MCF 10A (cell line): ENCODE measurements at regions of chr9 and their contacts with region 1.

Region 1: GRCh38 chr9:129177791-129178559 is at the start of gene IER5L:
- DNase-seq: peak; percentile 95
- H3K4me3 Mint-ChIP-seq: peak within 1 kb of the TSS; percentile 89
- H3K27ac Mint-ChIP-seq: peak within 1 kb of the TSS; percentile 51
- H3K4me1 Mint-ChIP-seq: no peaks in the 10 kb centered on the region
- H3K27me3 Mint-ChIP-seq: no peaks in the 10 kb centered on the region
- CTCF ChIP-seq: no peak
- total RNA-seq, gene IER5L: 11.9 and 13.4 TPM in 2 replicates

Region 2: DNA sequence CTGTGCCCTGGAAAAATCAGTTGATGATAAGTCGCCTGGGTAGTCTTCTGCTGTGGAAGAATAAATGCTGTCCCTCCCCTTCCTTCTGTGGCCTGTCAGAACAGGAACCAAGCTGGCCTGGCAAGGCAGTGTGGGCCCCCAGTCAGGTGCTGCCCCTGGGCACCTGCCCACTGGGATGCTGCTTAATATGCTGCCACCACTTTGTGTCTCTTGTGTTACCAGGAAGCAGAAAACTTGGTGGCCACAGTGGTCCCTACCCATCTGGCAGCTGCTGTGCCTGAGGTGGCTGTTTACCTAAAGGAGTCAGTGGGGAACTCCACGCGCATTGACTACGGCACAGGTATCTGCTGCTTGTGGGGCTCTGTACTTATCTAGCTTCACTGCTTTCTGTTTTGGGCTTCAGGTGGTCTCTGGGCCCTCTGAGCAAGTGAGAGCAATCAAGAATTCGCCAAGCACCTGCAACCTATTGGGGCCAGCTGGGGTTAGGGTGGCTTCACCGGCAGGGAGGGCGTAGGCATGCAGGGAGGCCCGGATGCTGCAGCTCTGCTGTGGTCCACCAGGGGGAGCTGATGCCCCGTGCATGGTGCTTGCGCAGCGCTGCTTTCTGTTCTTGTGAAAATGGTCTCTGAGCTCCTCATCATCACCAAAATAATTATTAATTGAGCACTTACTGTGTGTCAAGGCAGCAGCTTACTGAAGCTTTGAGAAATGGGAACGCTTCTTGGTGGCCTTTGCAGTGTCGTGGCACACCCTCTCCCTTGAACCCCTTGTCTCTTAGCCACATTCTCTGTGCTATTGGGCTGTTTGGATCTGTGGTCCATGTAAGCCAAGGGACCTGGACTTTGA is 46.5 kb before region 1 on chr9:
- CTCF ChIA-PET with region 1: interaction called, 18 read pairs
- POLR2A ChIA-PET with region 1: interaction called, 9 read pairs
- intact Hi-C with region 1: no loop called
- DNase-seq: peak; percentile 70
- H3K4me3 Mint-ChIP-seq: no peak overlapping the region
- H3K27ac Mint-ChIP-seq: no peak overlapping the region
- H3K4me1 Mint-ChIP-seq: no peaks in the 10 kb centered on the region
- H3K27me3 Mint-ChIP-seq: no peaks in the 10 kb centered on the region
- CTCF ChIP-seq: peak; percentile 92

Region 3: GRCh38 chr9:129166623-129167557 is 11.1 kb before region 1 on chr9:
- CTCF ChIA-PET with region 1: interaction called, 8 read pairs
- POLR2A ChIA-PET with region 1: interaction called, 29 read pairs
- intact Hi-C with region 1: no loop called
- DNase-seq: peak; percentile 81
- H3K4me3 Mint-ChIP-seq: peak overlapping the region; percentile 63
- H3K27ac Mint-ChIP-seq: peak overlapping the region; percentile 87
- H3K4me1 Mint-ChIP-seq: peaks cover 25% of the 10 kb centered on the region
- H3K27me3 Mint-ChIP-seq: no peaks in the 10 kb centered on the region
- CTCF ChIP-seq: no peak

Region 4: GRCh38 chr9:129333953-129334724 is 156.2 kb after region 1 on chr9:
- CTCF ChIA-PET with region 1: interaction called, 28 read pairs
- POLR2A ChIA-PET with region 1: interaction called, 206 read pairs
- intact Hi-C with region 1: loop called (anchors 1 kb)
- DNase-seq: peak; percentile 98
- H3K4me3 Mint-ChIP-seq: peak overlapping the region; percentile 71
- H3K27ac Mint-ChIP-seq: peak overlapping the region; percentile 97
- H3K4me1 Mint-ChIP-seq: peaks cover 19% of the 10 kb centered on the region
- H3K27me3 Mint-ChIP-seq: no peaks in the 10 kb centered on the region
- CTCF ChIP-seq: no peak

Region 5: GRCh38 chr9:129482521-129483414 is 304.8 kb after region 1 on chr9:
- CTCF ChIA-PET with region 1: interaction called, 4 read pairs
- POLR2A ChIA-PET with region 1: interaction called, 75 read pairs
- intact Hi-C with region 1: no loop called
- DNase-seq: peak; percentile 92
- H3K4me3 Mint-ChIP-seq: peak overlapping the region; percentile 70
- H3K27ac Mint-ChIP-seq: peak overlapping the region; percentile 93
- H3K4me1 Mint-ChIP-seq: peaks cover 47% of the 10 kb centered on the region
- H3K27me3 Mint-ChIP-seq: no peaks in the 10 kb centered on the region
- CTCF ChIP-seq: no peak

Region 6: DNA sequence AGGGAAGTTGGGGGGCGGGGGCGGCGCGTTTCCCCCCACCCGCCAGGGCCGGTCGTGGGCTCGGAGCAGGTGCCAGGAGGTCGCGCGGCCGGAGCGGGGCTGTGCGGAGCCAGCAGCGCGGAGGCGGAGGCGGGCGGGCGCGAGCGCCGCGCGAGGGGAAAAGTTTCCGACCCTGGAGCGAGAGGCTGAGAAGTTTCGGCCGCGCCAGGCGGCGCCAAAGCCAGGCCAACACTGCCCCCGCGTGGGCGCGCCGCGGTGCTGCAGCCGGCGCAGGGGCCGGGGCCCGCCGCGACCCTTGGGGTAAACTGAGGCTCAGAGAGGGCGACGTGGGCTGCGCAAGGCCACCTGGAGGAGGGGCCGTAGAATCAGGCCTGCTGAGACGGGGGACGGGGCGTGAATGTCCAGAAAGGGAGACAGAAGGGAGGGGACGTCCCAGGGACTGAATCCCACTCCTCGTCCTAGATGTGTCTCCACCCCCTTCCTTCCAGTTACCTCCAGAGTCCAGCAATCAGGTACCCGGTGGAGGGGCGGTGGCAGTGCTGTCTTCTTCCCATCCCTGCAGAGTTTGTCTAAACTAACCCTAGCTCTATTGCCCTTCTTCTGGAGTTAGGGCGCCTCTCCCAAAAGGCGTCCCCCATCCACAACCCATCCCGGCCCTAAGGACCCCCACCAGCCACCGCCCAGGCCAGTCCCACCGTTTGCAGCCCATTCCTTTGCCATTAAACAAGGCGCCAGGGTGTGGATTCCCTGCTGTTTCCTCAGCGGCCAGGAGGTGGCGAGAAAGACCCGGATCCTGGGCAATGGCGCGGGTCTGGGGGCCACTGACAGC is 432.7 kb after region 1 on chr9:
- CTCF ChIA-PET with region 1: interaction called, 50 read pairs
- POLR2A ChIA-PET with region 1: interaction called, 10 read pairs
- intact Hi-C with region 1: loop called (anchors 1 kb)
- DNase-seq: peak; percentile 66
- H3K4me3 Mint-ChIP-seq: peak overlapping the region; percentile 75
- H3K27ac Mint-ChIP-seq: no peak overlapping the region
- H3K4me1 Mint-ChIP-seq: peaks cover 13% of the 10 kb centered on the region
- H3K27me3 Mint-ChIP-seq: no peaks in the 10 kb centered on the region
- CTCF ChIP-seq: peak; percentile 88